Psoas muscle (tissue), 8 donors: ENCODE measurements at regions of chr16 and their contacts with region 1.

Region 1: DNA sequence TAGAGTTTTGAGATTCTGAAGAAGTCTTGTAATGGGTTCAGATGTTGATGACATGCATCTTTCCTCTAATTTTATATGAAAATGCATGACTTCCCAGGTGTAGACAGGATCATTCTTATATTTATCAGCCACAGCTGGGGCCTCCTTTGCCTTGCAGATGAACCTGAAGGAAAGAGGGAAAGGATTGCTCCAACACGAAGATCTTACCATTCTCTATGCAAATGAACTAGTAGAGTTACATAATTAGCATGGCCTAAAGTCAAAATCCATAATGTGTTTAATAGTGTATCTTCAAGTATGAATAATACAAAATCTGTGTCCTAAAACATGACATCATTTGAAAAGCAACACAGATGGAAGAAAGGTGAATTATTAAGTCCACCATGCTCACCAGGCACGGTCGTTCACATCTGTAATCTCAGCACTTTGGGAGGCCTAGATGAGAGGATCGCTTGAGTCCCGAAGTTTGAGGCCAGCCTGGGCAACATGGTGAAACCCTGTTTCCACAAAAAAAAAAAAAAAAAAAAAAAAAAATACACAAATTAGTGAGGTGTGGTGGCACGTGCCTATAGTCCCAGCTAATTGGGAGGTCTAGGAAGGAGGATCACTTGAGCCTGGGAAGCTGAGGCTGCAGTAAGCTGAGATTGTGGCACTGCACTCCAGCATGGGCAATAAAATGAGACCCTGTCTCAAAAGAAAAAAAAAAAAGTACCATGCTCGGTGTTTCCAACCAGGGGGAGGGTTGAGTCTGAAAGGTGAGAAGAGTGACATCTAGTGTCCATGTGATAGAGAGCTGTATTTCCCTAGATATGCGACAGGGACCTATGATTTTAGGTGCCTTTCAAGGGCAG is 6.3 kb downstream of the VWA3A start:
- DNase-seq: no peak
- ATAC-seq: peak in 3 of 4 donors; percentile 71 to 81 (median 78)
- H3K4me3 ChIP-seq: no peak overlapping the region
- H3K27ac ChIP-seq: no peak overlapping the region
- H3K4me1 ChIP-seq: no peaks in the 10 kb centered on the region
- H3K27me3 ChIP-seq: no peaks in the 10 kb centered on the region
- CTCF ChIP-seq: peak; percentile 57

Region 2: GRCh38 chr16:21952793-21953540 is 145.7 kb before region 1 on chr16 and contains the start of gene UQCRC2:
- intact Hi-C with region 1: loop called in 1 of 2 experiments (anchors 5 kb)
- DNase-seq: peak; percentile 87 to 92
- ATAC-seq: peak; percentile 95 to 98 (median 96)
- H3K4me3 ChIP-seq: peak within 1 kb of the TSS; percentile 97
- H3K27ac ChIP-seq: peak within 1 kb of the TSS; percentile 97
- H3K4me1 ChIP-seq: peaks cover 42% of the 10 kb centered on the region
- H3K27me3 ChIP-seq: no peaks in the 10 kb centered on the region
- CTCF ChIP-seq: no peak
- total RNA-seq, gene UQCRC2: 434 to 716 (median 591) TPM

Region 3: GRCh38 chr16:22001591-22001990 is 97.0 kb before region 1 on chr16:
- intact Hi-C with region 1: loop called (anchors 5 kb)
- DNase-seq: no peak
- ATAC-seq: no peak
- H3K4me3 ChIP-seq: no peak overlapping the region
- H3K27ac ChIP-seq: no peak overlapping the region
- H3K4me1 ChIP-seq: peaks cover 11% of the 10 kb centered on the region
- H3K27me3 ChIP-seq: no peaks in the 10 kb centered on the region
- CTCF ChIP-seq: no peak

Region 4: GRCh38 chr16:22174642-22175041 is 76.0 kb after region 1 on chr16:
- intact Hi-C with region 1: no loop called
- DNase-seq: no peak
- ATAC-seq: peak; percentile 58 to 96 (median 79)
- H3K4me3 ChIP-seq: no peak overlapping the region
- H3K27ac ChIP-seq: peak overlapping the region; percentile 74
- H3K4me1 ChIP-seq: no peaks in the 10 kb centered on the region
- H3K27me3 ChIP-seq: no peaks in the 10 kb centered on the region
- CTCF ChIP-seq: no peak

Region 5: GRCh38 chr16:22333457-22333994 is 234.9 kb after region 1 on chr16:
- intact Hi-C with region 1: no loop called
- DNase-seq: no peak
- ATAC-seq: peak in 2 of 4 donors; percentile 17 to 34
- H3K4me3 ChIP-seq: no peak overlapping the region
- H3K27ac ChIP-seq: no peak overlapping the region
- H3K4me1 ChIP-seq: no peaks in the 10 kb centered on the region
- H3K27me3 ChIP-seq: no peaks in the 10 kb centered on the region
- CTCF ChIP-seq: no peak